ENCODE measurements at regions of chr3 and their contacts with region 1.

Region 1: DNA sequence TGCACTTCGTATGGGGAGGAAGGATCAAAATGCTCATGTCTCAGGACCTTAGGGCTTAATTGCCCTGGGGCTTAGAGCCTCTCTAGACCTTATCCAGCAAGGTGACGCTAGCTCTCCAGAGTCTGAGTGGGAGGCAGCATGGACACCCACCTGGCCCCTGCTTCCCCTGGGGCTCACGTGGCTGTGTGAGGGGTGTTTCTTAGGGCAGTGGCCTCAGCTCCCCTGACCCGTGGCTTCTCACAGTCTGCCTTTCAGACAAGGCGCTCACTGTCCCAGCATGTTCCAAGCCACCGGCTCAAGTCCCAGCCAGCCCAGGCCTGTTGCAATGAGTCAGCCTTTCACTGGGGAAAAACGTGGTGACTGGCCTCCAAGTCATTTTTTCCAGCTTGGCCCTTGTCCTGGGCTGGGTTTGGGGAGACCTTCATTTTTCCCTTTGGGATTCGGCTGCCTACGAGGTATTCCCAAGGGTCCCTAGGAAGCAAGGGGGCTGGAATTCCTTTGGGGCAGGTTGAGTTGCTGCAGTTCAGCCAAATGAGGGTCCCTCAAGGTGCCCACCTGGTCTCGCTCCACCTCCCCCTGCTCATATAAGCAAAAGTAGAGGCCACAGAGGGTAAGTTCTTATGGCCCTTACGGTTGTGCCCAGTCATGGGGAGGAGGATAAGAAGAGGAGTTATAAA is 15.7 kb downstream of the BHLHE40 start:
- DNase-seq: no peak

Region 2: DNA sequence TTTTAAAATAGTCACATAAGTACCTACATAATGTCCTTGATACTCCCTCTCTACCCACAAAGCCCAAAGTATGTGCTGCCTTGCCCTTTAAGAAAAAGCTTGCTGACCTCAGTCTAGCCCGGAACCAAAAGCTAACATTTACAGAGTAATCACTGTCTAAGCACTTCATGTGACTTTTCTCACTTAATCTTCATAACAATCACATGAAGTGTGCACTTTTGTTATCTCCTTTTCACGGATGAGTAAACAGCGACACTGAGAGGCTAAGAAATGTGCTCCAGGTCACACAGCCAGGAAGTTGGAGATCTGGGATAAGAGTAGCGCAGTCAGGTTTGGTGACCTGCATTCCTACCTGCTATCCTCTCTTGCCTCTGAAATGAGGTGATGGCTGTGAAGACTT is 307.8 kb before region 1 on chr3:
- CTCF ChIA-PET with region 1: no interaction called
- POLR2A ChIA-PET with region 1: no interaction called
- DNase-seq: no peak

Region 3: GRCh38 chr3:4978204-4978965 is 16.6 kb before region 1 on chr3:
- CTCF ChIA-PET with region 1: interaction called, 3 read pairs
- POLR2A ChIA-PET with region 1: interaction called, 32 read pairs
- DNase-seq: peak; percentile 84

Region 4: DNA sequence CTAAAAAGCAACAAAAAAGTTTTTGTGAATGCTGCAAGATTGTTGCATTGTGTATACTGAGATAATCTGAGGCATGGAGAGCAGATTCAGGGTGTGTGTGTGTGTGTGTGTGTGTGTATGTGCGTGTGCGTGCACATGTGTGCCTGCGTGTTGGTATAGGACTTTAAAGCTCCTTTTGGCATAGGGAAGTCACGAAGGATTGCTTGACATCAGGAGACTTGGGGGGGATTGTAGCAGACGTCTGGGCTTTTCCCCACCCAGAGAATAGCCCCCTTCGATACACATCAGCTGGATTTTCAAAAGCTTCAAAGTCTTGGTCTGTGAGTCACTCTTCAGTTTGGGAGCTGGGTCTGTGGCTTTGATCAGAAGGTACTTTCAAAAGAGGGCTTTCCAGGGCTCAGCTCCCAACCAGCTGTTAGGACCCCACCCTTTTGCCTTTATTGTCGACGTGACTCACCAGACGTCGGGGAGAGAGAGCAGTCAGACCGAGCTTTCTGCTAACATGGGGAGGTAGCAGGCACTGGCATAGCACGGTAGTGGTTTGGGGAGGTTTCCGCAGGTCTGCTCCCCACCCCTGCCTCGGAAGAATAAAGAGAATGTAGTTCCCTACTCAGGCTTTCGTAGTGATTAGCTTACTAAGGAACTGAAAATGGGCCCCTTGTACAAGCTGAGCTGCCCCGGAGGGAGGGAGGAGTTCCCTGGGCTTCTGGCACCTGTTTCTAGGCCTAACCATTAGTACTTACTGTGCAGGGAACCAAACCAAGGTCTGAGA is 11.0 kb before region 1 on chr3:
- CTCF ChIA-PET with region 1: no interaction called
- POLR2A ChIA-PET with region 1: interaction called, 32 read pairs
- DNase-seq: no peak

Region 5: DNA sequence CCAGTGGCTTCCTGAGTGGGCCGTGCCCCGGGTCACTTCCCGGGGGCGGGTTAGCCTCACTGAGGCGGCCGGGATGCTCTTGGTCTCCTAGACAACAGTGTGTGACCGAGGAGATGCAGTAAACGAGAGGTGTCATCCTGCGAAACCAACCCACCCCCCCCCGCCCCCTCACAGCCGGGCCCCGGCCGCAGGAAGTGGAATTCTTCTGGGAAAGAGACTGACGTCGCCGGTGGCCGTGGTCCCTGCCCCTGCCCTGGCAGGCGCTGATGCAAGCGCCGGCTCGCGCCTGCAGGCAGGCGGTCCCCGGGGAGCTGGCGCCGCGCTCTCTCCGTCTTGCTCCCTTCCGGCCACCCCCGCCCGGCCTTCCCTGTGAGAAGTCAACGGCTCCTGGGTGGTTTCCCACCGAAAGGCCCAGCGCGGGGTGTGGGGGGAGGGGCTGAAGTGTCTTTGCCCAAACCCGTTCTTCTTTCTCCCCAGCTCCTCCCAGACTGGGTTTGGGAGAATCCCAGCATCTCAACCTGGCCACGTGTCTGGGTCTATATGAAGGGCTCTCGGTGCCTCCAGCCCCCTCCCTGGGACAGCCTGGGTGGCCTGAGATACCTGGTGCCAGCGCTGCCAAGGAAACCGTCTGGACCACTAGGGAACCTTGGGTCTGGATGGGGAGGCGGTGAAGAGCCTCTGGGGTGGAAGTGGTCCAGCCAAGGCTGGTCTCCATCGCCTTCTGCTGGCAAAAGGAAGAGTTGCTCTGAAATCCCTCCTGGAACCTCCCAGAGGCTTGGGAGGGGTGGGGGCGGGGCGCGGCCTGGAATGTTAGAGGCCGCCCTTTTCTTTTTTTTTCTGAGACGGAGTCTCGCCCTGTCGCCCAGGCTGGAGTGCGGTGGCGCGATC is 31.6 kb after region 1 on chr3:
- CTCF ChIA-PET with region 1: no interaction called
- POLR2A ChIA-PET with region 1: interaction called, 11 read pairs
- DNase-seq: peak; percentile 88

Region 6: GRCh38 chr3:5041315-5041714 is 46.4 kb after region 1 on chr3:
- CTCF ChIA-PET with region 1: no interaction called
- POLR2A ChIA-PET with region 1: no interaction called
- DNase-seq: no peak